Naive thymus-derived CD4-positive, alpha-beta T cell (primary cell): ENCODE measurements at regions of chr4 and their contacts with region 1.

Region 1: GRCh38 chr4:155376387-155377268 is at the start of gene MAP9:
- DNase-seq: peak; percentile 74 to 92 (median 89)
- ATAC-seq: peak; percentile 91
- H3K4me3 ChIP-seq: peak within 1 kb of the TSS; percentile 73
- H3K4me3 Mint-ChIP-seq: peak within 1 kb of the TSS; percentile 81 to 93 (median 92)
- H3K27ac ChIP-seq: peak within 1 kb of the TSS; percentile 77
- H3K27ac Mint-ChIP-seq: peak within 1 kb of the TSS; percentile 72 to 97 (median 91)
- H3K4me1 ChIP-seq: peaks cover 8 to 11% of the 10 kb centered on the region in 2 donors
- H3K4me1 Mint-ChIP-seq: peaks cover 4 to 22% (median 18%) of the 10 kb centered on the region in 7 donors
- H3K27me3 ChIP-seq: no peaks in the 10 kb centered on the region
- H3K27me3 Mint-ChIP-seq: peaks cover 0 to 5% (median 0%) of the 10 kb centered on the region in 5 donors
- total RNA-seq, gene MAP9: 3.2 to 20.5 (median 7.0) TPM

Region 2: GRCh38 chr4:153791746-153792617 is 1584.6 kb before region 1 on chr4:
- CTCF ChIA-PET with region 1: no interaction called
- POLR2A ChIA-PET with region 1: no interaction called
- intact Hi-C with region 1: loop called in 1 of 2 experiments (anchors 10 kb)
- DNase-seq: peak in 1 of 9 donors; percentile 22
- ATAC-seq: no peak
- H3K4me3 ChIP-seq: peak overlapping the region; percentile 38
- H3K4me3 Mint-ChIP-seq: peak overlapping the region; percentile 61 to 87 (median 80)
- H3K27ac ChIP-seq: no peak overlapping the region
- H3K27ac Mint-ChIP-seq: no peak overlapping the region
- H3K4me1 ChIP-seq: peaks cover 13 to 37% of the 10 kb centered on the region in 2 donors
- H3K4me1 Mint-ChIP-seq: peaks cover 21 to 62% (median 42%) of the 10 kb centered on the region in 7 donors
- H3K27me3 ChIP-seq: peaks cover 7 to 26% of the 10 kb centered on the region in 2 donors
- H3K27me3 Mint-ChIP-seq: peaks cover 67 to 95% (median 82%) of the 10 kb centered on the region in 5 donors

Region 3: DNA sequence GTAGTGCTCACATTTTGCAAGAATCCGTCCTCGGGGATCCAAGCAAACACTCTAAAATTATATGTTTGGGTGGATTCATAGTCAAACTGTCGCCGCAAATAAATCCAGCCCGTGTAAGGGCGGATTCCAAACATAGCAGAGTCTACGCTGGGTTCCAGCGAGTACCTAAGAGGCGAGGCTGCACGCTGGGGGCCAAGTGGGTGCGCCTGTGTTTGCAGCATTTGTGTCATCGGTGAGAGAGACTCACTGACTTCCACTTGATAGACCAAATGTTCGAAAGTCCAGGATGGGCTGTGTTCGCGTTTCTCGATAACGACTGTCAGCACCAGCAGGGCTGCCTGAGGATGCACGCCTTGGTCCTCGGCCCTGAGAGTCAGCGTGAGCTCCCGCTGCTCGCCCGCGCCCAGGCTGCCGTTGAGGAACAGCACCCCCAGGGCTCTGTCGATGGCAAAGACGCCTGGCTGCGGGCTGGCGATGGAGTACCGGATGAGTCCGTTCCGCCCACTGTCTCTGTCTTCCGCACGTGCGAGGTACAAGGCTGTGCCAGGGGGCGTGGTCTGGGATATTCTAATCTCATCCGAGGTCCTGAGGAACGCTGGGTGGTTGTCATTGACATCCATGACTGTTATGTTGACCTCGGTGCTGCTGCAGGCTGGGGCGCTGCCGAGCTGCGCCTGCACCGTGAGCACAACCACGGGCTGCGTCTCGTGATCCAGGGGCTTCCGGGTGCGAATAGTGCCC is 1043.8 kb before region 1 on chr4:
- CTCF ChIA-PET with region 1: no interaction called
- POLR2A ChIA-PET with region 1: no interaction called
- intact Hi-C with region 1: loop called in 1 of 2 experiments (anchors 10 kb)
- DNase-seq: peak; percentile 25 to 68 (median 60)
- ATAC-seq: peak; percentile 85
- H3K4me3 ChIP-seq: peak overlapping the region; percentile 39
- H3K4me3 Mint-ChIP-seq: peak overlapping the region; percentile 80 to 92 (median 86)
- H3K27ac ChIP-seq: no peak overlapping the region
- H3K27ac Mint-ChIP-seq: peak overlapping the region in 7 of 9 donors; percentile 29 to 86 (median 83)
- H3K4me1 ChIP-seq: no peaks in the 10 kb centered on the region
- H3K4me1 Mint-ChIP-seq: peaks cover 4 to 13% (median 12%) of the 10 kb centered on the region in 7 donors
- H3K27me3 ChIP-seq: no peaks in the 10 kb centered on the region
- H3K27me3 Mint-ChIP-seq: peaks cover 14 to 53% (median 19%) of the 10 kb centered on the region in 5 donors

Region 4: DNA sequence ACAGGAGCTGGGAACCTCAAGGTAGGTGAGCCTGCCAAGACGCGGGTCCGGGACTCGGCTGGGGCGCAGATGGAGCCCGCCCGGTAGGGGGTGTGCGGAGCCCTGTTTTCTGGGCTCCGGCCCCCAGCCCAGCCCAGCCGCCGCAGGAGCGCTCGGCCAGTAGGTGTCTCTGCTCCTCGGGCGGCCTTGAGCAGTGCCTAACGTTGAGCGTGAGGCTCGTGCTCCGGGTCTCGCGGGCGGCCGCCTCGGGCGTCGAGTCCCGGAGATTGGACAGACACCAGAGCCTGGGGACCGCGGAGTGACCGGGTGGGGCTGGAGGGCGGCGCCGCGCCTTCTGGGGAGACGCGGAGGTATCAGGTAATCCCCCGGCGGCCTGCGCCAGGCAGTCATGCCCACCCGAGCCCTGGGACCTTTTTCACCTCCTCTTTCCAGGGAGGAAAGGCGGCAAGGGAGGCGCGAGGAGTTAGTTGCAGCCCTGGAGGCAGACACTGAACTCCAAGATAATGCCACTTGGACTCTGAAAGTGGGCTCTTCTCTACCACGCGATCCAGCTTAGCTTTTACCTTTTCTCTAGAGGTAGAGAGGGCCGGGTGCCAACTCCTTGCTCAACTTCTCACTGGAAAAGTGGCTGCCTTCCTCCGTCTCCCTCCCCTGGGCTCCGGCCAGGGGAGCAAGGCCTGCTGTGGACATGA is 749.7 kb before region 1 on chr4:
- CTCF ChIA-PET with region 1: no interaction called
- POLR2A ChIA-PET with region 1: no interaction called
- intact Hi-C with region 1: loop called in 1 of 2 experiments (anchors 2 kb)
- DNase-seq: peak in 8 of 9 donors; percentile 10 to 47 (median 24)
- ATAC-seq: peak; percentile 87
- H3K4me3 ChIP-seq: peak overlapping the region; percentile 37
- H3K4me3 Mint-ChIP-seq: peak overlapping the region in 4 of 10 donors; percentile 41 to 58 (median 50)
- H3K27ac ChIP-seq: no peak overlapping the region
- H3K27ac Mint-ChIP-seq: no peak overlapping the region
- H3K4me1 ChIP-seq: no peaks in the 10 kb centered on the region
- H3K4me1 Mint-ChIP-seq: peaks cover 0 to 6% (median 5%) of the 10 kb centered on the region in 7 donors
- H3K27me3 ChIP-seq: peaks cover 0 to 4% of the 10 kb centered on the region in 2 donors
- H3K27me3 Mint-ChIP-seq: peaks cover 11 to 28% (median 14%) of the 10 kb centered on the region in 5 donors

Region 5: GRCh38 chr4:155758481-155759404 is 382.1 kb after region 1 on chr4 and contains the start of gene GUCY1B1:
- CTCF ChIA-PET with region 1: no interaction called
- POLR2A ChIA-PET with region 1: no interaction called
- intact Hi-C with region 1: loop called in 1 of 2 experiments (anchors 5 kb)
- DNase-seq: peak; percentile 35 to 81 (median 61)
- ATAC-seq: peak; percentile 98
- H3K4me3 ChIP-seq: no peak within 1 kb of the TSS
- H3K4me3 Mint-ChIP-seq: peak within 1 kb of the TSS; percentile 33 to 79 (median 70)
- H3K27ac ChIP-seq: no peak within 1 kb of the TSS
- H3K27ac Mint-ChIP-seq: peak within 1 kb of the TSS in 1 of 9 donors; percentile 53
- H3K4me1 ChIP-seq: no peaks in the 10 kb centered on the region
- H3K4me1 Mint-ChIP-seq: peaks cover 6 to 14% (median 10%) of the 10 kb centered on the region in 7 donors
- H3K27me3 ChIP-seq: peaks cover 0 to 10% of the 10 kb centered on the region in 2 donors
- H3K27me3 Mint-ChIP-seq: peaks cover 17 to 44% (median 32%) of the 10 kb centered on the region in 5 donors
- total RNA-seq, gene GUCY1B1: 0.22 to 1.7 (median 0.29) TPM in 3 of 5 experiments, not detected in the others